Activated CD8-positive, alpha-beta T cell treated with anti-CD3 and anti-CD28 coated beads, Interleukin-2, amount 10 ng/mL, durations not matched to agents 7 days and 5 days (primary cell): ENCODE measurements at regions of chr3 and their contacts with region 1.

Region 1: GRCh38 chr3:122679085-122679881 is 1.4 kb upstream of the PARP14 start:
- DNase-seq: peak; percentile 92
- ATAC-seq: peak; percentile 64
- H3K4me3 Mint-ChIP-seq: peak overlapping the region; percentile 94
- H3K27ac Mint-ChIP-seq: peak overlapping the region; percentile 94
- H3K4me1 Mint-ChIP-seq: peaks cover 56% of the 10 kb centered on the region
- H3K27me3 Mint-ChIP-seq: no peaks in the 10 kb centered on the region

Region 2: DNA sequence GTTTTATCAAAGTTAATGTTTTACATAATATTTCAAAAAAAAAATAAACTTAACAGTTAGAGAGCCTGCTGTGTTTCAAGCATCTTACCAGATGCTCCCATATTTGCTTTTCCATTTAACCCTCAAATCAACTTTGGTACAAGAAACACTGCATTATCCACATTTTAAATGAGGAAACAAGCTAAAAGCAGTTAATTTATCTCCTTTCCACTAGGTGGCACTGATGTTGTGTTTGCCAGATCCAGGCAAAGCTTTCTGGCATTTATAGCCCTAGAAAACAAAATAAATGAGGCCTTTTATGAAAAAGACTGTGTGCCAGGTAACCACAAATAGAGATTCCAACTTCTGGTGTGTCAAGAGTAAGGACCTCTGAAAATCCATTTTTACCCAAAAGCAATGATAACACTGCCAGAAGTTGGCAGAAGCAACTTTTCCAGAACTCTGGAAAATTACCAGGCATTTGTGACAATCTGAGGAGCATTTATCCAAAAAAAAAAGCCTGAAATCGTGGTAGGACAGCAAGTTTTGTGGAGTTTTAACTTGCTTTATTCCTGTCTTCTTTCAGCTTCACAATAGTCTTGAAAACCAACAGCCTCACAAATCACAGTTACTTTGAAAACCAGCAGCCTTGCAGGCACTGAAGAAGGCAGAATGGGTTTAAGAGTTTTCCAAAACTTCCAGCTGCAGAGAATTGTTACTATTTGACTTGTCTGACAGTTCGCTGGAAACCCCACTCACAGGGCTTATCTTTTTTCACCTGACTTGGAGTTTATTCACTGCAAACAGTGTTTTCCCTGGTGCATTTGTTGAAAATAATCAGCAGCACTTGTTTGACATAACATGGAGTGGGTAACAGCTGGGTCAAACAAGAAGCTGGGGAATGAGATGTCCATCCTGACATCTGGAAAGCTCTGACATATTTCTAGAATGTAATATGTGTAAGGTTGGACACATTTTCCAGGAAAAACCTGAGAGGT is 286.1 kb before region 1 on chr3:
- CTCF ChIA-PET with region 1: interaction called, 53 read pairs
- POLR2A ChIA-PET with region 1: no interaction called
- DNase-seq: peak; percentile 42
- ATAC-seq: no peak
- H3K4me3 Mint-ChIP-seq: no peak overlapping the region
- H3K27ac Mint-ChIP-seq: no peak overlapping the region
- H3K4me1 Mint-ChIP-seq: peaks cover 28% of the 10 kb centered on the region
- H3K27me3 Mint-ChIP-seq: no peaks in the 10 kb centered on the region

Region 3: DNA sequence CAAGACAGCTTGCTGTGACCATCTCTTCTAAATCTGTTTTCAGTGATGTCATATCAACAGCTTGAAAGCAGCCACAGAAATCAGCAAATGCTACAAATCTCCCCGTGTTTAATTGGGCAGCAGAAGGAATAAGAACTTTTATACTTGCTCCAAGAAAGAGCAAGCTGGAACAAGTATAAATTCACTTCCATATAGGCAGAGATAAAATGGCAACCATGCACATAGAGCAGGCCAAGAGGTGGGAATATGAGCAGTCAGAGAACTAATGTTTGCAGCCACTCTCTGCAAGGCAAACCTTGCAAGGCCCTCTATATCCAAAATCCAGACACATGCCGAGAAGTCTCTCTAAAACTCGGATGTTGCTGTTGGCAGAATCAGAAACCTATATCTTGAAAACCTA is 131.2 kb before region 1 on chr3:
- CTCF ChIA-PET with region 1: interaction called, 17 read pairs
- POLR2A ChIA-PET with region 1: no interaction called
- DNase-seq: no peak
- ATAC-seq: no peak
- H3K4me3 Mint-ChIP-seq: no peak overlapping the region
- H3K27ac Mint-ChIP-seq: peak overlapping the region; percentile 26
- H3K4me1 Mint-ChIP-seq: peaks cover 10% of the 10 kb centered on the region
- H3K27me3 Mint-ChIP-seq: no peaks in the 10 kb centered on the region

Region 4: DNA sequence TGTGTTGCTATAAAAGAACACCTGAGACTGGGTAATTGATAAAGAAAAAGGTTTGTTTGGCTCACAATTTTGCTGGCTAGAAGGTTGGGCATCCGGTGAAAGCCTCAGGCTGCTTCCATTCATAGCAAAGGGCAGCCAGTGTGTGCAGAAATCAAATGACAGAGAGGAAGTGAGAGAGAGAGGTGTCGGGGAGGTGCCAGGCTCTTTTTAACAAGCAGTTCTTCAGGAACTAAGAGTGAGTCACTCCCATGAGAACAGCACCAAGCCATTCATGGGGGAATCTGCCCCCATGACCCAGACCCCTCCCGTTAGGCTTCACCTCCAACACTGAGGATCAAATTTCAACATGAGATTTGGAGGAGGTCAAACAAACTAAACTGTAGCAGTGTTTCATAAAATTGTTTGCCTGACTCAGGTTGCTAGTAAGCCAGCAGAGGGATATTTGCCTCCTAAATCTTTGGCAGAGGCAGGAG is 106.3 kb before region 1 on chr3:
- CTCF ChIA-PET with region 1: interaction called, 21 read pairs
- POLR2A ChIA-PET with region 1: interaction called, 3 read pairs
- DNase-seq: peak; percentile 39
- ATAC-seq: no peak
- H3K4me3 Mint-ChIP-seq: no peak overlapping the region
- H3K27ac Mint-ChIP-seq: peak overlapping the region; percentile 77
- H3K4me1 Mint-ChIP-seq: peaks cover 60% of the 10 kb centered on the region
- H3K27me3 Mint-ChIP-seq: no peaks in the 10 kb centered on the region

Region 5: GRCh38 chr3:122609798-122610559 is 69.3 kb before region 1 on chr3:
- CTCF ChIA-PET with region 1: interaction called, 8 read pairs
- POLR2A ChIA-PET with region 1: interaction called, 11 read pairs
- DNase-seq: peak; percentile 39
- ATAC-seq: peak; percentile 92
- H3K4me3 Mint-ChIP-seq: peak overlapping the region; percentile 47
- H3K27ac Mint-ChIP-seq: peak overlapping the region; percentile 88
- H3K4me1 Mint-ChIP-seq: peaks cover 25% of the 10 kb centered on the region
- H3K27me3 Mint-ChIP-seq: no peaks in the 10 kb centered on the region

Region 6: GRCh38 chr3:122810734-122811133 is 131.5 kb after region 1 on chr3:
- CTCF ChIA-PET with region 1: no interaction called
- POLR2A ChIA-PET with region 1: no interaction called
- DNase-seq: no peak
- ATAC-seq: no peak
- H3K4me3 Mint-ChIP-seq: no peak overlapping the region
- H3K27ac Mint-ChIP-seq: no peak overlapping the region
- H3K4me1 Mint-ChIP-seq: no peaks in the 10 kb centered on the region
- H3K27me3 Mint-ChIP-seq: no peaks in the 10 kb centered on the region

Region 7: GRCh38 chr3:122975163-122975923 is 296.1 kb after region 1 on chr3:
- CTCF ChIA-PET with region 1: no interaction called
- POLR2A ChIA-PET with region 1: no interaction called
- DNase-seq: peak; percentile 39
- ATAC-seq: peak; percentile 71
- H3K4me3 Mint-ChIP-seq: peak overlapping the region; percentile 28
- H3K27ac Mint-ChIP-seq: peak overlapping the region; percentile 69
- H3K4me1 Mint-ChIP-seq: peaks cover 40% of the 10 kb centered on the region
- H3K27me3 Mint-ChIP-seq: peaks cover 4% of the 10 kb centered on the region